ENCODE measurements at regions of chr7 and their contacts with region 1.

Region 1: GRCh38 chr7:151782598-151783448 is 94.1 kb downstream of the PRKAG2 start:
- DNase-seq: peak; percentile 71
- H3K4me3 ChIP-seq: peak overlapping the region; percentile 50
- H3K27ac ChIP-seq: no peak overlapping the region
- H3K4me1 ChIP-seq: peaks cover 10% of the 10 kb centered on the region
- H3K27me3 ChIP-seq: no peaks in the 10 kb centered on the region
- CTCF ChIP-seq: peak; percentile 94

Region 2: DNA sequence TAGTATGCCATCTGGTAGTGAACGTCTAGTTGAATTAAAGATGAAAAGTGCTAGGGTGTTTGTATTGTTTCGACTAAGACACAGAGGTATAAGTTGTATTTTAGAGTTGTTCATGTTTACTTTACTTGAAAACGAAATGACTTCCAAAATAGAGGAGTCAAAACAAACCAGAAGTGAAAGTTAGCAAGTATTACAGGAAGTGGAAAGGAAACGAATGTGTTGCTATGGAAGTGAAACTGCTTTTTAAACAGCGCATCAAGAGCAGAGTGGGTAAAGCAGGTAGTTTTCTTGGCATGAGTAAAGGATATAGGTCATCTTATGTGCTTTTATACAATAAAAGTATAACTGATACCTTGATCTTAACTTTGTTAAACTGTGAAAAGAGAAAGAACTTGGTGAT is 153.4 kb after region 1 on chr7:
- intact Hi-C with region 1: loop called (anchors 10 kb)
- DNase-seq: no peak
- H3K4me3 ChIP-seq: no peak overlapping the region
- H3K27ac ChIP-seq: no peak overlapping the region
- H3K4me1 ChIP-seq: no peaks in the 10 kb centered on the region
- H3K27me3 ChIP-seq: peaks cover 7% of the 10 kb centered on the region
- CTCF ChIP-seq: no peak

Region 3: GRCh38 chr7:152090747-152091146 is 307.9 kb after region 1 on chr7:
- intact Hi-C with region 1: no loop called
- DNase-seq: no peak
- H3K4me3 ChIP-seq: no peak overlapping the region
- H3K27ac ChIP-seq: no peak overlapping the region
- H3K4me1 ChIP-seq: no peaks in the 10 kb centered on the region
- H3K27me3 ChIP-seq: no peaks in the 10 kb centered on the region
- CTCF ChIP-seq: no peak